ENCODE measurements at regions of chr6 and their contacts with region 1.

Region 1: GRCh38 chr6:17987576-17988421 is at the start of gene KIF13A:
- DNase-seq: peak; percentile 36 to 60
- ATAC-seq: peak; percentile 72 to 80 (median 78)
- H3K4me3 ChIP-seq: peak within 1 kb of the TSS; percentile 41
- H3K4me3 Mint-ChIP-seq: peak within 1 kb of the TSS; percentile 95
- H3K27ac ChIP-seq: peak within 1 kb of the TSS; percentile 37
- H3K27ac Mint-ChIP-seq: peak within 1 kb of the TSS; percentile 60 to 86
- H3K4me1 ChIP-seq: peaks cover 18% of the 10 kb centered on the region
- H3K4me1 Mint-ChIP-seq: peaks cover 23 to 44% of the 10 kb centered on the region in 2 donors
- H3K27me3 ChIP-seq: no peaks in the 10 kb centered on the region
- H3K27me3 Mint-ChIP-seq: peaks cover 0 to 9% of the 10 kb centered on the region in 2 donors
- CTCF ChIP-seq: peak; percentile 22
- total RNA-seq, gene KIF13A: 15.0 to 26.4 (median 19.5) TPM

Region 2: DNA sequence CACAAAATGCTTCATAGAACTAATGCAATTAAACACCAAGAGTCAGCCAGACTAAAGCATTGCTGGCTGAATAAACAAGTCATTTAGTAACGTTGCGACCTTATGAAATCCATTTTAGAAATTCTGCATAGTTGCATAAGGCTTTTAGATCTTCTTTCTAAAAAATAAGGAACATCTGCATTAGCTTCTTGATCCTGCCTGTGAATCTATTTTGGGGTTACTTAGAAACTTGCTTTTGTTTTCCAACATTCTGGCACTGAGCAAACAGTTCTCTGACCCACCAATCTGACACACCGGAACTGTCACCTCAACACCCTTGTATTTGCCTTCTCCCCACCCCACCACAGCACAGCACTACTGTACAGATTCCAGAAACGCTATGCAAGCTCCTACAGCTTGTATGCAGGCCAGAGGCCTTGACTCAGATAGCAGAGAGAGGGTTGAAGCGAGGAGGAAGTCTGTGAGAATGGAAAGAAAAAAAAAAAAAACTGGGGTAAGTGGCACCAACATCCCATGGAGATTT is 55.4 kb before region 1 on chr6:
- intact Hi-C with region 1: loop called (anchors 2 kb)
- DNase-seq: peak in 1 of 2 donors; percentile 35
- ATAC-seq: peak; percentile 82 to 85 (median 82)
- H3K4me3 ChIP-seq: no peak overlapping the region
- H3K4me3 Mint-ChIP-seq: peak overlapping the region; percentile 76
- H3K27ac ChIP-seq: peak overlapping the region; percentile 44
- H3K27ac Mint-ChIP-seq: peak overlapping the region; percentile 85 to 87
- H3K4me1 ChIP-seq: peaks cover 15% of the 10 kb centered on the region
- H3K4me1 Mint-ChIP-seq: peaks cover 32 to 70% of the 10 kb centered on the region in 2 donors
- H3K27me3 ChIP-seq: no peaks in the 10 kb centered on the region
- H3K27me3 Mint-ChIP-seq: no peaks in the 10 kb centered on the region
- CTCF ChIP-seq: no peak

Region 3: DNA sequence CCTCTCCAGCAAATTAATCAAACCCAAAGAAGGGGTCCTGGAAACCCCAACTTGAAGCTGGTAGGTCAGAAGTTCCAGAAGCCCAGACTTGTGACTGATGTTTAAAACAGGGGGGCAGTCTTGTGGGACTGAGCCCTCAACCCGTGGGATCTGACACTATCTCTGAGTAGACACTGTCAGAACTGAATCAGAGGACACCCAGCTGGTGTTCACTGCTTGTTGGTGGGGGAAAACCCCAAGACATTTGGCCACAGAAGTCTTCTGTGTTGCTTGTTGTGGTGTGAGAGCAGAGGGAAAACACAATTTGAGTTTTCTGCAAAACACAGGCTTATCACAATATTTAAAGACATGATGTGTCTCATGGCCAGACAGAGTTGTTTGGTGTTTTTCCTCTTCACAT is 30.3 kb before region 1 on chr6:
- intact Hi-C with region 1: loop called (anchors 2 kb)
- DNase-seq: peak; percentile 2 to 41
- ATAC-seq: peak; percentile 88 to 95 (median 90)
- H3K4me3 ChIP-seq: no peak overlapping the region
- H3K4me3 Mint-ChIP-seq: peak overlapping the region; percentile 28
- H3K27ac ChIP-seq: peak overlapping the region; percentile 42
- H3K27ac Mint-ChIP-seq: peak overlapping the region; percentile 90 to 95
- H3K4me1 ChIP-seq: peaks cover 5% of the 10 kb centered on the region
- H3K4me1 Mint-ChIP-seq: peaks cover 34 to 35% of the 10 kb centered on the region in 2 donors
- H3K27me3 ChIP-seq: no peaks in the 10 kb centered on the region
- H3K27me3 Mint-ChIP-seq: no peaks in the 10 kb centered on the region
- CTCF ChIP-seq: no peak

Region 4: DNA sequence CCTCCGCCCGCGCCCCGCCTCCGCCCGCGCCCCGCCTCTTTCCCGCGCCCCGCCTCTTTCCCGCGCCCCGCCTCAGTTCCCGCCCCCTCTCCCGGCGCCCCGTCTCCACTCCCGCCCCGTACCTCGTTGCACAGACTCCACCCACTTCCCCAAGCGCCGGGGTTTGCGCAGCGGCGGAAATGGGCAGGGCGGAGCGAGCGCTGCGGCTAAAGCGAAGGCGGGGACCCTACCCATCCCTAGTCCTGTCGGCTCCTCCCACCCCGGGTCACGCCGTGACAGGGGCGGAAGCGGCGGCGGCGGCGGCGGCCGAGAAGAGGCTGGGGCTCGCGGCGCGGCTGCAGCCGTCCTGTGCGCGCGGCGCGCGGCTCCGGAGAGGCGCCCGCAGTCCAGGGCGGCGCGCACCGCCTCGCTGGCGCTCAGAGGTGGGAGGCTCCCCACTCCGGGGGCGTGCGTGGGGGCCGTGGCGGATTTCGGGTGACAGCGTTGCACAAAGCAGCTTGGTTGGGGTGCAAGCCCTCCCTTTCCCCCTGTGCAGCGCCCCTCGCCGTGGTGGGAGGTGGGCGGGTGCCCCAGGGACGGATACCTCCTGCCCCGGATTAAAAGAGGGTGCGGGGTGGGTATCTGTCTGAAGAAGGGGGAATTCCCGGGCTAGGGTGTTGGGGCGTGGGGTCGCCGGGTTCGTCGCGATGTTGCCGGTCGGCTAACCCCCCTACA is 167.5 kb after region 1 on chr6 and contains the start of gene KDM1B:
- intact Hi-C with region 1: loop called (anchors 10 kb)
- DNase-seq: peak; percentile 98 to 99
- ATAC-seq: peak; percentile 89 to 98 (median 91)
- H3K4me3 ChIP-seq: peak within 1 kb of the TSS; percentile 99
- H3K4me3 Mint-ChIP-seq: peak within 1 kb of the TSS; percentile 97
- H3K27ac ChIP-seq: peak within 1 kb of the TSS; percentile 95
- H3K27ac Mint-ChIP-seq: peak within 1 kb of the TSS; percentile 93 to 99
- H3K4me1 ChIP-seq: peaks cover 28% of the 10 kb centered on the region
- H3K4me1 Mint-ChIP-seq: peaks cover 26 to 34% of the 10 kb centered on the region in 2 donors
- H3K27me3 ChIP-seq: no peaks in the 10 kb centered on the region
- H3K27me3 Mint-ChIP-seq: no peaks in the 10 kb centered on the region
- CTCF ChIP-seq: no peak
- total RNA-seq, gene KDM1B: 12.7 to 13.3 (median 13.0) TPM

Region 5: DNA sequence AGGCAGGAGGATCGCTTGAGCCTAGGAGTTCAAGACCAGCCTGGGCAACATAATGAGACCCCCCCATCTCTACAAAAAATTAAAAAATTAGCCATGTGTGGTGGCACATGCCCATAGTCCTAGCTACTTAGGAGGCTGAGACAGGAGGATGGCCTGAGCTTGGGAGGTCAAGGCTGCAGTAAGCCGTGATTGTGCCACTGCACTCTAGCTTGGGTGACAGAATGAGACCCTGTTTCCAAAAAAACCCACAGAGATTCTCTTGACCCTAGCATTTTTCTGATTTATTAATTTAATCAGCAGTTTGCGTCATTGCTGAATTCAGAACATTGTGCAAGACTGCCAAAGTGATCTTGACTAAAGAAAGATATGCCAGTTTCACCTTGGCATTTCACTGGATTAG is 204.2 kb after region 1 on chr6:
- intact Hi-C with region 1: no loop called
- DNase-seq: no peak
- ATAC-seq: no peak
- H3K4me3 ChIP-seq: no peak overlapping the region
- H3K4me3 Mint-ChIP-seq: no peak overlapping the region
- H3K27ac ChIP-seq: no peak overlapping the region
- H3K27ac Mint-ChIP-seq: no peak overlapping the region
- H3K4me1 ChIP-seq: no peaks in the 10 kb centered on the region
- H3K4me1 Mint-ChIP-seq: no peaks in the 10 kb centered on the region
- H3K27me3 ChIP-seq: no peaks in the 10 kb centered on the region
- H3K27me3 Mint-ChIP-seq: no peaks in the 10 kb centered on the region
- CTCF ChIP-seq: no peak

Measured in natural killer cell (primary cell).